Ascending aorta (tissue), 2 donors: ENCODE measurements at regions of chr7 and their contacts with region 1.

Region 1: GRCh38 chr7:5450549-5451372 is 27.1 kb upstream of the TNRC18 start:
- DNase-seq: no peak
- H3K4me3 ChIP-seq: no peak overlapping the region
- H3K27ac ChIP-seq: no peak overlapping the region
- H3K4me1 ChIP-seq: peaks cover 0 to 3% of the 10 kb centered on the region in 2 donors
- H3K27me3 ChIP-seq: no peaks in the 10 kb centered on the region
- CTCF ChIP-seq: peak; percentile 51 to 88 (median 79)

Region 2: GRCh38 chr7:5237286-5237685 is 213.5 kb before region 1 on chr7:
- intact Hi-C with region 1: loop called (anchors 2 kb)
- DNase-seq: peak; percentile 56 to 76
- H3K4me3 ChIP-seq: peak overlapping the region in 1 of 2 donors; percentile 5
- H3K27ac ChIP-seq: no peak overlapping the region
- H3K4me1 ChIP-seq: peaks cover 3% of the 10 kb centered on the region in 2 donors
- H3K27me3 ChIP-seq: no peaks in the 10 kb centered on the region
- CTCF ChIP-seq: no peak

Region 3: DNA sequence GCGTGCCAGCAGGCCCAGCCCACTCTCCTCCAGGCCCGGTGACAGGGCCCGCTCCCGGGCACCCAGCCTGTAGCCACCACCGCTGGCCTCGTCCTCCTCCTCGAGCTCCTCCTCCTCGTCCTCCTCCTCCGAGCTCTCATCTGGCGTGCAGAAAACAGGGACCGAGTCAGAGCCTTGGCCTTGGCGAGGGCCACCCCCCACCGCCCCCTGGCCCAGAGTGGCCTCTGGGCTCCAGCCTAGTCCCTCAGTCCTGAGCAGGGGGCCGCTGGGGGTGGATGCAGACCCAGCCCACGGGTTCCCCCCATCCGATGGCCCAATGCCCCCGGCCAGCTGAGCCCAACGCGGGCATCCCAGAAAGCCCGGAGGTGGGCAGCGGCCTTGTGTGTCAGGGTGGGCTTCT is 105.1 kb before region 1 on chr7:
- intact Hi-C with region 1: no loop called
- DNase-seq: no peak
- H3K4me3 ChIP-seq: no peak overlapping the region
- H3K27ac ChIP-seq: no peak overlapping the region
- H3K4me1 ChIP-seq: no peaks in the 10 kb centered on the region
- H3K27me3 ChIP-seq: no peaks in the 10 kb centered on the region
- CTCF ChIP-seq: no peak

Region 4: DNA sequence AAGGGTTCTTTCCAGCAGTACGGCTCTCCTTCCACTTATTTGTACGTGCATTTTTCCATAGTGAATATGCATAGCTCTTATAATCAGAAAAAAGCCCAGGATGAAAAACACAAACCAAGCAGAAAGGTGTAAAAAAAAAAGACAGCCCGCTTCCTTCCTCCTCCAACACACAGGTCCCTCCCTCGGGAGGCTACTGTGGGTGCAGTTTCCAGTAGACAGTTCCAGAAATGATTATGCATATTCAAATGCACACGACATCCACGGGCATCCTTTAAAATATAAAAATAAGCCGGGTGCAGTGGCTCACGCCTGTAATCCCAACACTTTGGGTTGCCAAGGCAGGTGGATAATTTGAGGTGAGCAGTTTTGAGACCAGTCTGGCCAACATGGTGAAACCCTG is 87.0 kb before region 1 on chr7:
- intact Hi-C with region 1: loop called (anchors 1 kb)
- DNase-seq: no peak
- H3K4me3 ChIP-seq: no peak overlapping the region
- H3K27ac ChIP-seq: no peak overlapping the region
- H3K4me1 ChIP-seq: peaks cover 0 to 11% of the 10 kb centered on the region in 2 donors
- H3K27me3 ChIP-seq: no peaks in the 10 kb centered on the region
- CTCF ChIP-seq: no peak